ENCODE measurements at regions of chr15 and their contacts with region 1.

Region 1: DNA sequence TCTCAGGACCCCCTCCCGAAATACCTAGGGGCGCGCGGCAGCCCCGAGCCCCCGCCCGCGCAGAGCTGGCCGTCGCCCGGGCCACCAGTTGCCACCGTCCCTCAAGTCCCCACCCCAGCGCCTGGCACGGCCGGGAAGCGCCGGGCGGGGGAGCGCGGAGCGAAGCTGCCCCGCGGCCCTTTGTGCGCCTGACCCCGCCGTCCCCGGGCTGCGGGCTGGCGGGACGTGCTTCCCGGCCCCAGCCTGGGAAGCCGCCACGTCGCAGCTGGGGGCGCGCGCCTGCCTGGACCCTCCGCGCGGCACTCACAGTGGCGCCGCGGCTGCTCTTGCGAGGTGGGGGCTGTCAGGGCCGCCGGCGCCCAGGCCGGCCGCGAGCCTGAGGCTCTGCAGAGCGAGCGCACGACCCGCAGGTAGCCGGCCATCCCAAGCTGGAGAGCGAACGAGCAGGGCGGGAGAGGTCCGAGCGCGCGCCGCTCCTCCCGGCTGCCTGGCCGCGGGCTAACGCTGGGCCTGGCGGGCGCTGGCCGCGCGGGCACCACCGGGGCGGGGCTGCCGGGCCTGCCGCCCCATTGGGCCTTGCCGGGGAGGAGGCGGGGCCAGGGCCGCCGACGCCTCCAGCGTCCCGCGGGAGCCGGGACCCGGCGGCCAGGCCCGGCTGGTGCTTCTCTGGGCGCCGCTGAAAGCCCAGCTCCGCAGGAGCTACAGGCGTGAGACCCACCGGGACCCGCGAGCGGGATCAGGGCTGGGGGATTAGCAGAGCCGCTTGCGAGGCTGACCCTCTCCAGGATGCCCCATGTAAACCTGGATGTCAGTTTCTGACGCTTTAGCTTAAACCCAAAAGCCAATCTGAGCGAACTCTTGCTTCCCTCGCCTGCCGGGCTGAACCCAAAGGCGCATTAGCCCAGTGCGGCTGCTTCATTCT is at the start of gene IDH2:
- DNase-seq: peak; percentile 26 to 89 (median 68)
- ATAC-seq: peak; percentile 68
- H3K4me3 ChIP-seq: peak within 1 kb of the TSS; percentile 69 to 81
- H3K4me3 Mint-ChIP-seq: peak within 1 kb of the TSS; percentile 91
- H3K27ac ChIP-seq: peak within 1 kb of the TSS; percentile 81 to 87
- H3K27ac Mint-ChIP-seq: peak within 1 kb of the TSS; percentile 100
- H3K4me1 ChIP-seq: peaks cover 41% of the 10 kb centered on the region
- H3K4me1 Mint-ChIP-seq: peaks cover 53% of the 10 kb centered on the region
- H3K27me3 ChIP-seq: no peaks in the 10 kb centered on the region
- H3K27me3 Mint-ChIP-seq: peaks cover 3% of the 10 kb centered on the region
- CTCF ChIP-seq: no peak
- total RNA-seq, gene IDH2: 41.5 to 42.2 TPM

Region 2: DNA sequence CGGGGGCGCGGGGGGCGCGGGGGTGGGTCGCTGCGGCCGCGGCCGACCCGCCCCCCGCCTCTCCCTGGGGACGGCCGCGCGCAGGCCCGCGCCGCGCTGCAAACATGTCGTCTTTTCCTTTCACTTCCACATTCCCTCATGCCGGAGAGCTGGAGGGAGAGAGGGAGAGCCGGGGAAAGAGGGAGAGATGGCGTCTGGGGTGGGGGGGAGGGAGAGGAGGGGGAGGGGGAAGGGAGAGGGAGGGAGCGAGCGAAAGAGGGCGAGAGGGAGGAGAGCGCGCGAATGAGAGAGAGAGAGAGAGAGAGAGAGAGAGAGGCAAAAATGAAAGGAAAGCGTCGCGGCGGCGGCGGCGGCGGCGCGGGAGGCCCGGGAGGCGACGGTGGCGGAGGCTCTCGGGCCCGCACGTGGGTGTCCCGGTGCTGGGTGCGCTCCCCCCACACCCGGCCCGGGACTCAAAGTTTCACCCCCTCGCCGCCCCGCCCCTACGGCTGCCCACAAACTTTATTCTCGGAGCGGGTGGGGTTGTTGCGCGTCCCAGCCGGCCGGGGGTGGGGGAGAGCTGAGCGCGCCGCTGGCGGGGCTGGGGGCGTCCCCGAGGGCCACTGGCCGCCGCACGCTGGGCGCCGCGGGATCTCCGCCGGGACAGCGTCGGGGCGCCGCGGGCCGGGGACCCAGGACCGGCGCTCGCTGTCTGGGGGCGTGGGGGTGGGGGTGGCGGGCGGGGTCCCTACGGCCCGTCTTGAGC is 100.4 kb before region 1 on chr15:
- CTCF ChIA-PET with region 1: no interaction called
- POLR2A ChIA-PET with region 1: interaction called, 3 read pairs
- intact Hi-C with region 1: loop called in 1 of 2 experiments (anchors 2 kb)
- DNase-seq: peak; percentile 22 to 82 (median 58)
- ATAC-seq: peak; percentile 65
- H3K4me3 ChIP-seq: peak overlapping the region; percentile 48 to 61
- H3K4me3 Mint-ChIP-seq: peak overlapping the region; percentile 88
- H3K27ac ChIP-seq: peak overlapping the region in 1 of 2 experiments; percentile 53
- H3K27ac Mint-ChIP-seq: peak overlapping the region; percentile 79
- H3K4me1 ChIP-seq: peaks cover 27% of the 10 kb centered on the region
- H3K4me1 Mint-ChIP-seq: peaks cover 51% of the 10 kb centered on the region
- H3K27me3 ChIP-seq: no peaks in the 10 kb centered on the region
- H3K27me3 Mint-ChIP-seq: no peaks in the 10 kb centered on the region
- CTCF ChIP-seq: no peak

Region 3: DNA sequence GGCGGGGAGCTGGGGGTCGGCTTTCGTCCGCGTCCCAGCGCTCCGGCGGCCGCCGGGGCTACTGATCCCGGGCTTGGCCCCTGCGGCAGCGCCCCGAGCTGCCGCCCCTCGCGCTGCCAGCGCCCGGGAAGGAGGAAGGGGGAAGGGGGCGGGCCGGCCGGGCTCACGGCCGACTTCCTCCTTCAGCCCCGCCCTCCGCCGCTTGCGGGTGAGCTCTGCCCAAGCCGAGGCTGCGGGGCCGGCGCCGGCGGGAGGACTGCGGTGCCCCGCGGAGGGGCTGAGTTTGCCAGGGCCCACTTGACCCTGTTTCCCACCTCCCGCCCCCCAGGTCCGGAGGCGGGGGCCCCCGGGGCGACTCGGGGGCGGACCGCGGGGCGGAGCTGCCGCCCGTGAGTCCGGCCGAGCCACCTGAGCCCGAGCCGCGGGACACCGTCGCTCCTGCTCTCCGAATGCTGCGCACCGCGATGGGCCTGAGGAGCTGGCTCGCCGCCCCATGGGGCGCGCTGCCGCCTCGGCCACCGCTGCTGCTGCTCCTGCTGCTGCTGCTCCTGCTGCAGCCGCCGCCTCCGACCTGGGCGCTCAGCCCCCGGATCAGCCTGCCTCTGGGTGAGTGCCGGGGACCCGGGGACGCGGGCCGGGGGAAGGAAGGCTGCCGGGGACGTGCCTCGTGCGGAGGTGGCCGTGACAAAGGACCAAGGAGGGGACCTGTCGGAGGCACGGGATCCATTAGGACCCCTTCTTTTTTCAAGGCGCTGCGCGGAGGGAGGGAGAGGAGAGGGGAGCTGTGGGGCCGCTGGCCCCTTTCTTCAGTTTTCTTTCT is 99.1 kb after region 1 on chr15 and contains the start of gene SEMA4B:
- CTCF ChIA-PET with region 1: interaction called, 3 read pairs
- POLR2A ChIA-PET with region 1: interaction called, 5 read pairs
- intact Hi-C with region 1: loop called in 1 of 2 experiments (anchors 1 kb)
- DNase-seq: peak; percentile 37 to 86 (median 74)
- ATAC-seq: peak; percentile 91
- H3K4me3 ChIP-seq: peak within 1 kb of the TSS; percentile 69 to 79
- H3K4me3 Mint-ChIP-seq: peak within 1 kb of the TSS; percentile 88
- H3K27ac ChIP-seq: peak within 1 kb of the TSS; percentile 56 to 60
- H3K27ac Mint-ChIP-seq: peak within 1 kb of the TSS; percentile 82
- H3K4me1 ChIP-seq: peaks cover 21% of the 10 kb centered on the region
- H3K4me1 Mint-ChIP-seq: peaks cover 22% of the 10 kb centered on the region
- H3K27me3 ChIP-seq: no peaks in the 10 kb centered on the region
- H3K27me3 Mint-ChIP-seq: no peaks in the 10 kb centered on the region
- CTCF ChIP-seq: no peak
- total RNA-seq, gene SEMA4B: 7.5 to 12.3 TPM

Region 4: GRCh38 chr15:90394748-90395442 is 292.7 kb after region 1 on chr15:
- CTCF ChIA-PET with region 1: no interaction called
- POLR2A ChIA-PET with region 1: no interaction called
- intact Hi-C with region 1: loop called in 1 of 2 experiments (anchors 10 kb)
- DNase-seq: no peak
- ATAC-seq: no peak
- H3K4me3 ChIP-seq: no peak overlapping the region
- H3K4me3 Mint-ChIP-seq: no peak overlapping the region
- H3K27ac ChIP-seq: peak overlapping the region in 1 of 2 experiments; percentile 4
- H3K27ac Mint-ChIP-seq: no peak overlapping the region
- H3K4me1 ChIP-seq: peaks cover 54% of the 10 kb centered on the region
- H3K4me1 Mint-ChIP-seq: peaks cover 69% of the 10 kb centered on the region
- H3K27me3 ChIP-seq: no peaks in the 10 kb centered on the region
- H3K27me3 Mint-ChIP-seq: no peaks in the 10 kb centered on the region
- CTCF ChIP-seq: no peak

Region 5: GRCh38 chr15:90818251-90819210 is 716.3 kb after region 1 on chr15:
- CTCF ChIA-PET with region 1: no interaction called
- POLR2A ChIA-PET with region 1: no interaction called
- intact Hi-C with region 1: no loop called
- DNase-seq: peak in 5 of 9 experiments; percentile 27 to 60 (median 41)
- ATAC-seq: peak; percentile 64
- H3K4me3 ChIP-seq: no peak overlapping the region
- H3K4me3 Mint-ChIP-seq: peak overlapping the region; percentile 37
- H3K27ac ChIP-seq: no peak overlapping the region
- H3K27ac Mint-ChIP-seq: no peak overlapping the region
- H3K4me1 ChIP-seq: peaks cover 21% of the 10 kb centered on the region
- H3K4me1 Mint-ChIP-seq: peaks cover 36% of the 10 kb centered on the region
- H3K27me3 ChIP-seq: no peaks in the 10 kb centered on the region
- H3K27me3 Mint-ChIP-seq: no peaks in the 10 kb centered on the region
- CTCF ChIP-seq: peak; percentile 41

Region 6: DNA sequence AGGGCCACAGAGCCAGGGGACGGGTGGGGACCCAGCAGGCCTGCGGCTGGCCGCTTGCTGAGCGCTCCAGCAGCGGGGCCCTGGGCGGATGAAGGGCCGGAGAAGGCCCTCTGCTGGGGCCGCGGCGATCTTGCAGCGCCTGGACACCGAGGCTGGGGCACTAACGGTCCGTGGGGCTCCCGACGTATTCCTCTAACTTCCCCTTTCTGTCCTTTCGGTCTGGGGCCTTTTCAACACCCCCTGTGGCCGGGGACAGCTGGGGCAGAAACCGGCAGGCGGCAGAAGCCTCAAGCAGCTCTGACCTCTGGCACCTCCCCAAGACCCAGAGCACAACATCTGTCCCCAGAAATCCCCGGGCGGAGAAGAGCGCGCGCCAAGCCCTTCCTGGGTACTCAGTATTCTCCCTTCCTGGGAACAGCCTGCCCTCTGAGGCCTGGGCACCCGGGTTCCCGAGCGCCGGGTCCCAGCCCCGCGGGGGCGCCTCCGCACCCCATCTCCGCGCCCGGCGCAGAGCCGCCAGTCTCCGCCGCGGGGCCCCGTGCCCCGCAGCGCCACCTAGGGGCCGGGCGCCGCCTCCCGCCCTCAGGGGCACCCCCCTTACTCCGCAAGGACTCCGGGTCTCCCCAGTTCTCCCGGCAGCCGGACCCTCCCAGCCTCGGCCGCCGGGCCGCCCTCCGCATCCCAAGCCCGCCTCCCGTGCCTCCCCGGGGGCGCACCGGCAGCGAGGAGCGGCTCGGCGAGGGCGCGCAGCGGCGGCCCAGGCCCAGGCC is 1750.7 kb after region 1 on chr15:
- CTCF ChIA-PET with region 1: no interaction called
- POLR2A ChIA-PET with region 1: no interaction called
- intact Hi-C with region 1: loop called in 1 of 2 experiments (anchors 5 kb)
- DNase-seq: peak; percentile 58 to 88 (median 72)
- ATAC-seq: peak; percentile 57
- H3K4me3 ChIP-seq: peak overlapping the region; percentile 59 to 62
- H3K4me3 Mint-ChIP-seq: peak overlapping the region; percentile 86
- H3K27ac ChIP-seq: peak overlapping the region; percentile 56 to 57
- H3K27ac Mint-ChIP-seq: peak overlapping the region; percentile 91
- H3K4me1 ChIP-seq: peaks cover 56% of the 10 kb centered on the region
- H3K4me1 Mint-ChIP-seq: peaks cover 58% of the 10 kb centered on the region
- H3K27me3 ChIP-seq: no peaks in the 10 kb centered on the region
- H3K27me3 Mint-ChIP-seq: no peaks in the 10 kb centered on the region
- CTCF ChIP-seq: peak; percentile 71